ENCODE measurements at regions of chr22 and their contacts with region 1.

Region 1: DNA sequence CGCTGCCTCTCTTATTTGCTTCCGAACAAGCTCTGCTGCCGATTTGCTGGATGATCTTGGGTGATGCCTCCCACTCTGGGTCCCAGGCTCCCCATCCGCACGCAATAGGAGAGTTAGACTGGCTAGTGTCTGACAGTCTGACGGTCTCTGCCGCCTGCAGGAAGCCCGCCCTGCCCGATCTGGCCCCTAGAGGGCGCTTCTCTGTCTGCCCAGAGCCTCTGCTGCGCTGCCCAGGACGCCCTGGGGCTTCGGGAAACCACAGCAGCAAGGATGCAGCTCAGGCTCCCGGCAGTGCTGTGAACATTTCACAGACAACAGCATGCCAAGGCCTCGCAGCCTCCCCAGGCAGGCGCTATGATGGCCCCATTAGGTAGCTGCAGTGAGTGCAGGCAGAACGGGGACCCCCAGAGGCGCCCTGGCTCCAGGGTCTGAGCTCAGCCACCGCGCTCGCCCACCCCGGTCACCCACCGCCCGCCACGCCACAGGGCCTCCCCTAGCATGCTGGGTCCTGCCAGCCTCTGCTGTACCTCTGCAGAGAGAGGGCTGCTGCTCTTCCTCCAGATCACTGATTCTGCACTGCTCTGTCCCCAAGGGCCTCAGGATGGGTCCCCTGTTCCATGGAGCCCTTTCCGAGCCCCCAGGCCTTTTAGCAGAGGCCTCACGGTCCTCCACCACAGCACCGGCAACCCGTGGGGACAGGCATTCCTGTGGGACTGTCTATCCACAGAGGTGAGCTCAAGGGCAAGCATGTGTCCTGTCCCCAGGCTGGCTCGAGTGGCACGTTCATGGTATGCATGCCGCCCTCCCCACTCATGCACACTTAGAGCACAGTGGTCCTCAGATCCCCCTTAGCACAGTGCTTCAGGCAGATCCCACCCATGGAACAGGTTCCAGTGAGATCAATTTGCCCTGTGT is 4.3 kb upstream of the BAIAP2L2 start:
- DNase-seq: peak; percentile 76
- H3K4me3 Mint-ChIP-seq: no peak overlapping the region
- H3K27ac Mint-ChIP-seq: no peak overlapping the region
- H3K4me1 Mint-ChIP-seq: peaks cover 5% of the 10 kb centered on the region
- H3K27me3 Mint-ChIP-seq: no peaks in the 10 kb centered on the region
- CTCF ChIP-seq: peak; percentile 81

Region 2: DNA sequence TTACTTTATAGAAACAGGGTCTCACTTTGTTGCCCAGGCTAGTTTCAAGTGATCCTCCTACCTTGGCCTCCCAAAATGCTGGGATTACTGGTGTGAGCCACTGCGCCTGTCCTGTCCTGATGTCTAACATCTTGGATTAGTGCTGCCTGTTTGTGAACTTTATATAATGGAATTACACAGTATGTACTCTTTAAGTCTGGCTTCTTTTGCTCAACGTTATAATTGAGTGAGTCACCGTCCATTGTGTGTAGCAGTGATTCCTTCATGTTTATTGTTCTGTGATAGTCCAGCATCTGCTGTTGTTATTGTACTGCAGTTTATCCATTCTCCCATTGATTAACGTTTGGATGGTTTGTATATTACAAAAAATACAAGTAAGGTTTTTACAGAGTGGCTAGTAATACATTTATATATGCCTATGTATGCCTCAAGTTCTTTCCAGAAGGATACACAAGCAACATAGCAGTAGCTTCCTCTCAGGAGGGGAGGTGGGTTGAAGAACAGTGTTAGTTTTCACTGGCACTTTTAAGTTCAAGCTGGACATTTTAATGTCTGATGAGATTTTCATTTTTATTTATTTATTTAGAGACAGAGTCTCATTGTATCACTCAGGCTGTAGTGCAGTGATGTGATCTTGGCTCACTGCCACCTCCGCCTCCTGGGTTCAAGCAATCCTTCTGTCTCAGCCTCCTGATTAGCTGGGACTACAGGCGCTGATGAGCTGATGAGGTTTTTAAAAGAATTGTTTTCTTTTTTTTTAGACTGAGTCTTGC is 233.9 kb before region 1 on chr22:
- CTCF ChIA-PET with region 1: no interaction called
- POLR2A ChIA-PET with region 1: no interaction called
- intact Hi-C with region 1: no loop called
- DNase-seq: peak; percentile 40
- H3K4me3 Mint-ChIP-seq: no peak overlapping the region
- H3K27ac Mint-ChIP-seq: no peak overlapping the region
- H3K4me1 Mint-ChIP-seq: no peaks in the 10 kb centered on the region
- H3K27me3 Mint-ChIP-seq: no peaks in the 10 kb centered on the region
- CTCF ChIP-seq: no peak

Region 3: GRCh38 chr22:38040953-38041759 is 73.6 kb before region 1 on chr22:
- CTCF ChIA-PET with region 1: no interaction called
- POLR2A ChIA-PET with region 1: no interaction called
- intact Hi-C with region 1: no loop called
- DNase-seq: no peak
- H3K4me3 Mint-ChIP-seq: no peak overlapping the region
- H3K27ac Mint-ChIP-seq: no peak overlapping the region
- H3K4me1 Mint-ChIP-seq: no peaks in the 10 kb centered on the region
- H3K27me3 Mint-ChIP-seq: no peaks in the 10 kb centered on the region
- CTCF ChIP-seq: no peak

Region 4: DNA sequence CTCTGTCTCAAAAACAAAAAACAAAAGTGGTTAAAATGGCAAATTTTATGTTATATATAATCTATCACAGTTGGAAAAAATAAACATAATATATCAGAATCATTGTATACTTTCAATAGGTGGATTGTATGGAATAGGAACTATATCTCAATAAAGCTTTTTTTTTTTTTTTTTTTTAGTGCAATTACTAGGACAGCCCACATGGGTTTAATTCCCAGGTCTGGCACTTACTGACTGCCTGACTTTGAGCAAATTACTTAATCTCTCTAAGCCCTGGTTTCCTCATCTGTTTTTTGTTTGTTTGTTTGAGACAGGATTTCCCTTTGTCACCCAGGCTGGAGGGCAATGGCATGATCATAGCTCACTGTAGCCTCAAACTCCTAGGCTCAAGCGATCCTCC is 21.8 kb after region 1 on chr22:
- CTCF ChIA-PET with region 1: interaction called, 10 read pairs
- POLR2A ChIA-PET with region 1: no interaction called
- intact Hi-C with region 1: no loop called
- DNase-seq: no peak
- H3K4me3 Mint-ChIP-seq: no peak overlapping the region
- H3K27ac Mint-ChIP-seq: no peak overlapping the region
- H3K4me1 Mint-ChIP-seq: peaks cover 13% of the 10 kb centered on the region
- H3K27me3 Mint-ChIP-seq: no peaks in the 10 kb centered on the region
- CTCF ChIP-seq: no peak

Region 5: GRCh38 chr22:38181453-38182247 is 66.9 kb after region 1 on chr22 and contains the start of gene PLA2G6:
- CTCF ChIA-PET with region 1: interaction called, 4 read pairs
- POLR2A ChIA-PET with region 1: interaction called, 7 read pairs
- intact Hi-C with region 1: loop called (anchors 1 kb)
- DNase-seq: peak; percentile 99
- H3K4me3 Mint-ChIP-seq: peak within 1 kb of the TSS; percentile 97
- H3K27ac Mint-ChIP-seq: peak within 1 kb of the TSS; percentile 99
- H3K4me1 Mint-ChIP-seq: peaks cover 34% of the 10 kb centered on the region
- H3K27me3 Mint-ChIP-seq: no peaks in the 10 kb centered on the region
- CTCF ChIP-seq: no peak
- total RNA-seq, gene PLA2G6: 37.5 and 40.3 TPM in 2 replicates

Region 6: GRCh38 chr22:38230108-38230825 is 115.5 kb after region 1 on chr22:
- CTCF ChIA-PET with region 1: interaction called, 29 read pairs
- POLR2A ChIA-PET with region 1: interaction called, 4 read pairs
- intact Hi-C with region 1: loop called (anchors 5 kb)
- DNase-seq: peak; percentile 85
- H3K4me3 Mint-ChIP-seq: no peak overlapping the region
- H3K27ac Mint-ChIP-seq: peak overlapping the region; percentile 83
- H3K4me1 Mint-ChIP-seq: peaks cover 24% of the 10 kb centered on the region
- H3K27me3 Mint-ChIP-seq: no peaks in the 10 kb centered on the region
- CTCF ChIP-seq: peak; percentile 53

Region 7: GRCh38 chr22:38608992-38609750 is 494.4 kb after region 1 on chr22:
- CTCF ChIA-PET with region 1: no interaction called
- POLR2A ChIA-PET with region 1: no interaction called
- intact Hi-C with region 1: no loop called
- DNase-seq: no peak
- H3K4me3 Mint-ChIP-seq: no peak overlapping the region
- H3K27ac Mint-ChIP-seq: no peak overlapping the region
- H3K4me1 Mint-ChIP-seq: peaks cover 10% of the 10 kb centered on the region
- H3K27me3 Mint-ChIP-seq: no peaks in the 10 kb centered on the region
- CTCF ChIP-seq: no peak

Measured in MCF 10A (cell line).